HEK293 (cell line): ENCODE measurements at regions of chr1 and their contacts with region 1.

Region 1: GRCh38 chr1:113072757-113073478 is at the start of gene LRIG2:
- H3K4me3 ChIP-seq: peak within 1 kb of the TSS; percentile 95
- H3K27ac ChIP-seq: peak within 1 kb of the TSS; percentile 70
- H3K4me1 ChIP-seq: 0 out of 2 replicates have a peak, but pooled peaks cover 2% of the 10 kb centered on the region
- CTCF ChIP-seq: peak; percentile 96

Region 2: GRCh38 chr1:112882271-112882744 is 190.6 kb before region 1 on chr1:
- CTCF ChIA-PET with region 1: interaction called, 27 read pairs
- POLR2A ChIA-PET with region 1: no interaction called
- H3K4me3 ChIP-seq: no peak overlapping the region
- H3K27ac ChIP-seq: no peak overlapping the region
- H3K4me1 ChIP-seq: peaks cover 3% of the 10 kb centered on the region; the same call in 1 of the 2 replicates
- CTCF ChIP-seq: no peak

Region 3: DNA sequence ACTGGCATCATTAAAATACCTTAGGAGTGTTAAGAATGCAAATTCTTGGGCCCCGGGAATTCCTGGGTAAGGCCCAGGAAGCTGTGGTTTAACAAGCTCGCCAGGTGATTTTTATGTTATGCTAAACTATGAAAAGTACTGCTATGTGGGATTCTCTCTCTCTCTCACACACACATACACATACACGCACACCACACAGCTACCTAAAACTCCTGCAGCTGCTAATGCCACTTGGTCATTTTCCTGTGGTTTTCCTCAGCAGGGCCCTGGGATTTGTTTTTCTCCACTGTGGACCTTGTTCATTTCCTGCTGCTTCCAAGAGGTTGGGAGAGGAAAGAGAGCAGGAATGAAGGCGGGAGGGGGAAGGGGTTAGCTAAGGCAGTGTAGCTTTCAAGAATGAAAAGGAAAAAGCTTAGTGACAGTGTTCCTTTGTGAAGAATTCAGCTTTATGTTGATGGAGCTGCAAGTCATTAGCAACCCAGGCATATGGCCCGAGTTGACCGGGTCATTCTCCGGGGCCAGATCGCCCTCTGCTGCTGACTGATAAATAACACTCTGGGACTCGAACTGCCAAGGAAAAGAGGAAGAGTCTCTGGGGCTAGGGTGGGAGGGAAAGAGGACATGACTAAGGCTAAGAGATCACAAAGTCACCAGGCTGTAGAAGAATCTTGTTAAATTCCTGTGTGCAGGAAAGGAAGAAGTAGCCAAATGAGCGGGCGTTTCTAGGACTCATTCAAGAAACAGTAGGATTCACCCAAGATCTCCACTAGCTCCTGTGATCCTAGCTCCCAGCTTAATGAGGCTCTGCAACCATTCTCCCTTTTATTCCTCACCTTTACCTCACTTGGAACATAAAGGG is 30.4 kb before region 1 on chr1:
- CTCF ChIA-PET with region 1: interaction called, 11 read pairs
- POLR2A ChIA-PET with region 1: interaction called, 6 read pairs
- H3K4me3 ChIP-seq: no peak overlapping the region
- H3K27ac ChIP-seq: no peak overlapping the region
- H3K4me1 ChIP-seq: no peaks in the 10 kb centered on the region
- CTCF ChIP-seq: peak; percentile 46; the same call in 1 of the 2 replicates

Region 4: DNA sequence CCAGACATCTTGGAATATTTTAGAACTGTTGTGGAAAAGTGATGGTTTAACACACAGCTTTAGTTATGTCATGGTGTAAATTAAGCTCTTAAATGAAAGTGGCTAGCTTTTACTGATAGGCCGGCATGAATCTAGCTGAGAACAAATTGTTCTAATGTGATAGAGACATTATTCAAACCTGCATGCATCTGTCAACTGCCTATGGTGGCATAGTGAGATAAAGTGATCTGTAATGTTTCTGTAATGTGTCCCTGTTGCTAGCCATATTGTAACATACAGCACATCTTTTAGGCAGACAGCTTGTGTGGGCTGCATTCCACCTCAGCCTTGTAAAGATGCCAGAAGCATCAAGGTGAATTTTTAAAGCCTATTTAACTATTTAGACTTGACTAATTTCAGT is 16.1 kb after region 1 on chr1:
- CTCF ChIA-PET with region 1: interaction called, 18 read pairs
- POLR2A ChIA-PET with region 1: interaction called, 9 read pairs
- H3K4me3 ChIP-seq: no peak overlapping the region
- H3K27ac ChIP-seq: no peak overlapping the region
- H3K4me1 ChIP-seq: no peaks in the 10 kb centered on the region
- CTCF ChIP-seq: no peak

Region 5: GRCh38 chr1:113101588-113101987 is 28.7 kb after region 1 on chr1:
- CTCF ChIA-PET with region 1: interaction called, 12 read pairs
- POLR2A ChIA-PET with region 1: no interaction called
- H3K4me3 ChIP-seq: no peak overlapping the region
- H3K27ac ChIP-seq: no peak overlapping the region
- H3K4me1 ChIP-seq: no peaks in the 10 kb centered on the region
- CTCF ChIP-seq: no peak